GM18951 (cell line): ENCODE measurements at regions of chr12 and their contacts with region 1.

Region 1: GRCh38 chr12:50055831-50056638 is 1.4 kb upstream of the ASIC1 start:
- POLR2A ChIP-seq: no peak

Region 2: GRCh38 chr12:49974231-49974675 is 81.8 kb before region 1 on chr12:
- in situ Hi-C with region 1: loop called (anchors 5 kb)
- POLR2A ChIP-seq: no peak